ENCODE measurements at regions of chr20 and their contacts with region 1.

Region 1: GRCh38 chr20:53623454-53624211 is 30.0 kb upstream of the ZNF217 start:
- DNase-seq: peak; percentile 85
- H3K4me3 ChIP-seq: peak overlapping the region in 1 of 3 experiments; percentile 43
- H3K27ac ChIP-seq: peak overlapping the region; percentile 92
- H3K4me1 ChIP-seq: peaks cover 26% of the 10 kb centered on the region
- H3K27me3 ChIP-seq: no peaks in the 10 kb centered on the region
- CTCF ChIP-seq: no peak
- POLR2A ChIP-seq: no peak

Region 2: GRCh38 chr20:52722926-52723688 is 900.5 kb before region 1 on chr20:
- CTCF ChIA-PET with region 1: no interaction called
- POLR2A ChIA-PET with region 1: no interaction called
- dilution Hi-C with region 1: no loop called
- intact Hi-C with region 1: no loop called
- DNase-seq: no peak
- H3K4me3 ChIP-seq: no peak overlapping the region
- H3K27ac ChIP-seq: no peak overlapping the region
- H3K4me1 ChIP-seq: no peaks in the 10 kb centered on the region
- H3K27me3 ChIP-seq: no peaks in the 10 kb centered on the region
- CTCF ChIP-seq: no peak
- POLR2A ChIP-seq: no peak

Region 3: GRCh38 chr20:53578492-53579222 is 45.0 kb before region 1 on chr20:
- CTCF ChIA-PET with region 1: interaction called, 4 read pairs
- POLR2A ChIA-PET with region 1: no interaction called
- dilution Hi-C with region 1: no loop called
- intact Hi-C with region 1: loop called (anchors 5 kb)
- DNase-seq: peak; percentile 90
- H3K4me3 ChIP-seq: peak overlapping the region in 1 of 3 experiments; percentile 23
- H3K27ac ChIP-seq: peak overlapping the region; percentile 43
- H3K4me1 ChIP-seq: peaks cover 20% of the 10 kb centered on the region
- H3K27me3 ChIP-seq: no peaks in the 10 kb centered on the region
- CTCF ChIP-seq: peak; percentile 60 to 75
- POLR2A ChIP-seq: peak; percentile 13

Region 4: GRCh38 chr20:53609491-53610445 is 13.9 kb before region 1 on chr20:
- CTCF ChIA-PET with region 1: interaction called, 5 read pairs
- POLR2A ChIA-PET with region 1: interaction called, 3 read pairs
- dilution Hi-C with region 1: no loop called
- intact Hi-C with region 1: loop called (anchors 1 kb)
- DNase-seq: peak; percentile 55
- H3K4me3 ChIP-seq: no peak overlapping the region
- H3K27ac ChIP-seq: peak overlapping the region; percentile 29
- H3K4me1 ChIP-seq: peaks cover 29% of the 10 kb centered on the region
- H3K27me3 ChIP-seq: no peaks in the 10 kb centered on the region
- CTCF ChIP-seq: no peak
- POLR2A ChIP-seq: no peak

Region 5: DNA sequence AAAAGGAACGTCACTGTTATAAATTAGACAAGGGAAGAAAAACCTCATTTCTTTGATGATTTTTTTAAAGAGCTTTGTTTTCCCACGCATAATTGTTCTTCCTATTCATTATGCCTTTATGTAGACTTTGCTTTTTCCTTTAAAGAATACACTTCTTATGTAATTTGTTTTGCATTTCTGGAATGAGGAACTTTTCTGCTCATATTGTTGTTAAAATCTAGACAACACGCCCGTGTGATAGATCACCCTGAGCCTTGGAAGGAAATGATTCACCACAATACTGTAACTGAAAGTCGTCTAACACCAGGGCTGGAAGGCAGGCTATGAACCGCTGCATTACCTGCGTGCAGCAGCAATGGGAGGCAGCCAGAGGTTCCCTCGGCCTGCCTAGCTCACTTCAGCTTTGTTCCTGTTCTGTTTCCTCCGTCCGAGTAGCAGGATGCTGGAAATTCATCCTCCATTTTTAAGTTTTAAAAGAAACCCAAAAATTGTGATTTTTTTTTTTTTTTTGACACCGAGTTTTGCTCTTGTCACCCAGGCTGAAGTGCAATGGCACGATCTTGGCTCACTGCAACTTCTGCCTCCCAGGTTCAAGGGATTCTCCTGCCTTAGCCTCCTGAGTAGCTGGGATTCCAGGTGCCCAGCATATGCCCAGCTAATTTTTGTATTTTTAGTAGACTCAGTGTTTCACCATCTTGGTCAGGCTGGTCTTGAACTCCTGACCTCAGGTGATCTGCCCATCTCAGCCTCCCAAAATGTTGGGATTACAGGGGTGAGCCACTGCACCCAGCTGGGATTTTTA is 19.6 kb after region 1 on chr20:
- CTCF ChIA-PET with region 1: interaction called, 11 read pairs
- POLR2A ChIA-PET with region 1: interaction called, 5 read pairs
- dilution Hi-C with region 1: no loop called
- intact Hi-C with region 1: loop called (anchors 1 kb)
- DNase-seq: peak; percentile 91
- H3K4me3 ChIP-seq: peak overlapping the region in 1 of 3 experiments; percentile 28
- H3K27ac ChIP-seq: peak overlapping the region; percentile 89
- H3K4me1 ChIP-seq: peaks cover 20% of the 10 kb centered on the region
- H3K27me3 ChIP-seq: no peaks in the 10 kb centered on the region
- CTCF ChIP-seq: no peak
- POLR2A ChIP-seq: no peak

Region 6: DNA sequence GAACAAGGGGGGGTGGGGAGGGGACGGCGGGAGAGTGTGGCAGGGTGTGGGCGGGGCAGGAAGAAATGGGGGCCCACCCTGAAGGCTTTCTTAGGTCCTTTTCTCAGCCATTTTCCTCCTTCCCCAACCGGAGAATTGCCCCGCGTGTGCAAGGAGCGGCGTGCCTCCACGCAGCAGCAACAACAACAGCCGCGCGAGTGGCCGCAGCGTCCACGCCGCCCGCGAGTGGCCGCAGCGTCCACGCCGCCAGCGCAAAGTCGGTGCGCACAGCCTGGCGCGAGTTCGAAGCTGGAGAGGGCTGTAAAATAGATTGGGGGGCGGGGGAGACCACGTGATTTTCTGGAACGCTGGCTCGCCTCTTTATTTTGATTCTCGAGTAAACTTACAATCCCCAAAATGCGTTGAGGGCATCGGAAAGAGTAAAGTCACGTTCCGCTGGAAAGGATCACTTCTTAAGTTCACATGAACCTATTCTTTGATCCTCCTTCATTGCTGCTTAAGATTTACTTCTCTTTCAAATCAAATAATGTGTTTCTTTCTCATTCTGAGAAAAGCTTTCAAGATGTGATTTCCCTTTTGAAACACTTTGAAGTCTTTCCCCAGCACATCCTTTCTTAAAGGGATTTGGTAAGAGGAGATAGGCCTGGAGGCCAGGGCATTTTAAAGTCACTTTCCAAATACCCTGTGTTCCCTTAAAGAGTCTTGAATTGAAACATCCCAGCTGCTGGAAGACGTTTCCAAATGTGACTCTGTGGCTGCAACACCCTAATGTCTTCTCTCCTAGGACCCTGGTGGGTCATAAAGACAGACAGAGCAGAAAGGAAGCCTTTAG is 36.7 kb after region 1 on chr20:
- CTCF ChIA-PET with region 1: no interaction called
- POLR2A ChIA-PET with region 1: no interaction called
- dilution Hi-C with region 1: no loop called
- intact Hi-C with region 1: loop called (anchors 5 kb)
- DNase-seq: peak; percentile 22
- H3K4me3 ChIP-seq: peak overlapping the region; percentile 10 to 52 (median 13)
- H3K27ac ChIP-seq: no peak overlapping the region
- H3K4me1 ChIP-seq: peaks cover 5% of the 10 kb centered on the region
- H3K27me3 ChIP-seq: no peaks in the 10 kb centered on the region
- CTCF ChIP-seq: no peak
- POLR2A ChIP-seq: no peak

Region 7: DNA sequence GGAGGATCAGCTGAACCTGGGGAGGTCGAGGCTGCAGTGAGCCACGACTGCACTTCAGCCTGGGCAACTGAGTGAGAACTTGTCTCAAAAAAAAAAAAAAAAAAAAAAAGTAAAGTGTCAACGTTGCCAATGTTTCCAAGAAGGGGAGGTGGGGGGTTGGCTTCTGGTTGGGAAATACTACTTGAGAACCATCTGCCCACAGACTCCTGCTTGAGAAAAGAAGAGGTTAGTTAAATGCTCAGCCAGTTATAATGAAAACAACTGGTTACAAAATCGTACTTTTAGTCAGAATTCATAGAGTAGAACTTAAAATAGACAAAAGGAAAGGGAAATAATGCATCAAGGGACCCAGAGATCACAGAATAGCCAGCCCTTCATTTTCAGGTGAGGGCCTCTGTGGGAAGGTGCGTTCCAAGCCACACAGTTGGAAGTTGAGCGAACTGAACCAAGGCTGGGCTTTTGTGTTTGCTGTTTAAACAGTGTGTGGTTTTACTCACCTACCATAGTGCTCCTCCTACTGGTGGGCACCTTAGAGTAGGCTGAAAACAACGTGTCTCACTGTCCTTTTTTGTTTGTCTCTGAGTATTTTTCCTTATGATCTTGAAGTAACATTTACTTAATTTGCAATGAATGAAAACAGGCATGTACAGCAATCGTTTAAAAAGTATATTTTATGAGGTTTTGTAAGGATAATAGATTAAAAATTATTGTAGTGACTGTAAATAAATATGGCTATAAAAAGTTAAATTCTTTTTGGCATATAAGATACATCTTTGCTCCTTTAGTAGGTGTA is 246.0 kb after region 1 on chr20:
- CTCF ChIA-PET with region 1: interaction called, 8 read pairs
- POLR2A ChIA-PET with region 1: no interaction called
- dilution Hi-C with region 1: no loop called
- intact Hi-C with region 1: loop called (anchors 2 kb)
- DNase-seq: peak; percentile 82
- H3K4me3 ChIP-seq: no peak overlapping the region
- H3K27ac ChIP-seq: no peak overlapping the region
- H3K4me1 ChIP-seq: peaks cover 22% of the 10 kb centered on the region
- H3K27me3 ChIP-seq: no peaks in the 10 kb centered on the region
- CTCF ChIP-seq: peak; percentile 74 to 77
- POLR2A ChIP-seq: no peak

Region 8: GRCh38 chr20:53899351-53900167 is 275.9 kb after region 1 on chr20:
- CTCF ChIA-PET with region 1: interaction called, 7 read pairs
- POLR2A ChIA-PET with region 1: interaction called, 4 read pairs
- dilution Hi-C with region 1: no loop called
- intact Hi-C with region 1: loop called (anchors 1 kb)
- DNase-seq: peak; percentile 47
- H3K4me3 ChIP-seq: no peak overlapping the region
- H3K27ac ChIP-seq: peak overlapping the region; percentile 97
- H3K4me1 ChIP-seq: peaks cover 50% of the 10 kb centered on the region
- H3K27me3 ChIP-seq: no peaks in the 10 kb centered on the region
- CTCF ChIP-seq: no peak
- POLR2A ChIP-seq: no peak

Region 9: GRCh38 chr20:54115151-54115854 is 491.7 kb after region 1 on chr20:
- CTCF ChIA-PET with region 1: no interaction called
- POLR2A ChIA-PET with region 1: no interaction called
- dilution Hi-C with region 1: no loop called
- intact Hi-C with region 1: no loop called
- DNase-seq: no peak
- H3K4me3 ChIP-seq: no peak overlapping the region
- H3K27ac ChIP-seq: no peak overlapping the region
- H3K4me1 ChIP-seq: no peaks in the 10 kb centered on the region
- H3K27me3 ChIP-seq: no peaks in the 10 kb centered on the region
- CTCF ChIP-seq: no peak
- POLR2A ChIP-seq: no peak

Region 10: GRCh38 chr20:54355641-54356280 is 732.1 kb after region 1 on chr20:
- CTCF ChIA-PET with region 1: no interaction called
- POLR2A ChIA-PET with region 1: no interaction called
- dilution Hi-C with region 1: no loop called
- intact Hi-C with region 1: no loop called
- DNase-seq: no peak
- H3K4me3 ChIP-seq: no peak overlapping the region
- H3K27ac ChIP-seq: no peak overlapping the region
- H3K4me1 ChIP-seq: no peaks in the 10 kb centered on the region
- H3K27me3 ChIP-seq: no peaks in the 10 kb centered on the region
- CTCF ChIP-seq: no peak
- POLR2A ChIP-seq: no peak

Measured in endothelial cell of umbilical vein (primary cell).